ENCODE measurements at regions of chr13 and their contacts with region 1.

Region 1: GRCh38 chr13:30465585-30466357 is at the start of gene HMGB1:
- DNase-seq: peak; percentile 98 to 99 (median 99)
- ATAC-seq: peak; percentile 96 to 99 (median 98)
- H3K4me3 ChIP-seq: peak within 1 kb of the TSS; percentile 70 to 99 (median 94)
- H3K27ac ChIP-seq: peak within 1 kb of the TSS; percentile 98 to 100 (median 100)
- H3K4me1 ChIP-seq: peaks cover 2 to 39% (median 29%) of the 10 kb centered on the region in 12 donors
- H3K27me3 ChIP-seq: no peaks in the 10 kb centered on the region
- CTCF ChIP-seq: no peak
- POLR2A ChIP-seq: peak; percentile 94 to 98
- total RNA-seq, gene HMGB1: 137 to 215 (median 164) TPM

Region 2: GRCh38 chr13:30111810-30112209 is 354.0 kb before region 1 on chr13:
- intact Hi-C with region 1: no loop called
- DNase-seq: no peak
- ATAC-seq: no peak
- H3K4me3 ChIP-seq: no peak overlapping the region
- H3K27ac ChIP-seq: no peak overlapping the region
- H3K4me1 ChIP-seq: peaks cover 0 to 26% (median 12%) of the 10 kb centered on the region in 12 donors
- H3K27me3 ChIP-seq: no peaks in the 10 kb centered on the region
- CTCF ChIP-seq: no peak
- POLR2A ChIP-seq: no peak

Region 3: GRCh38 chr13:30257468-30258099 is 208.2 kb before region 1 on chr13:
- intact Hi-C with region 1: loop called in 2 of 10 experiments (anchors 5 kb)
- DNase-seq: peak in 2 of 5 donors; percentile 29 to 49
- ATAC-seq: peak; percentile 76 to 86 (median 81)
- H3K4me3 ChIP-seq: no peak overlapping the region
- H3K27ac ChIP-seq: peak overlapping the region in 9 of 12 donors; percentile 3 to 57 (median 28)
- H3K4me1 ChIP-seq: peaks cover 0 to 21% (median 9%) of the 10 kb centered on the region in 12 donors
- H3K27me3 ChIP-seq: no peaks in the 10 kb centered on the region
- CTCF ChIP-seq: no peak
- POLR2A ChIP-seq: no peak

Region 4: GRCh38 chr13:30364876-30365275 is 100.9 kb before region 1 on chr13:
- intact Hi-C with region 1: loop called in 2 of 10 experiments (anchors 5 kb)
- DNase-seq: peak in 1 of 5 donors; percentile 21
- ATAC-seq: peak in 1 of 4 donors; percentile 79
- H3K4me3 ChIP-seq: peak overlapping the region in 1 of 12 donors; percentile 17
- H3K27ac ChIP-seq: peak overlapping the region in 9 of 12 donors; percentile 20 to 79 (median 56)
- H3K4me1 ChIP-seq: peaks cover 0 to 38% (median 13%) of the 10 kb centered on the region in 12 donors
- H3K27me3 ChIP-seq: no peaks in the 10 kb centered on the region
- CTCF ChIP-seq: no peak
- POLR2A ChIP-seq: no peak

Region 5: GRCh38 chr13:30572859-30573275 is 107.1 kb after region 1 on chr13:
- intact Hi-C with region 1: loop called in 6 of 10 experiments (anchors 5 to 10 kb)
- DNase-seq: peak in 1 of 5 donors; percentile 17
- ATAC-seq: peak in 3 of 4 donors; percentile 59 to 81 (median 62)
- H3K4me3 ChIP-seq: peak overlapping the region in 10 of 12 donors; percentile 28 to 56 (median 42)
- H3K27ac ChIP-seq: peak overlapping the region in 11 of 12 donors; percentile 1 to 82 (median 53)
- H3K4me1 ChIP-seq: peaks cover 0 to 57% (median 15%) of the 10 kb centered on the region in 12 donors
- H3K27me3 ChIP-seq: no peaks in the 10 kb centered on the region
- CTCF ChIP-seq: peak in 6 of 12 donors; percentile 35 to 52 (median 42)
- POLR2A ChIP-seq: no peak

Region 6: GRCh38 chr13:30865123-30866049 is 399.6 kb after region 1 on chr13:
- intact Hi-C with region 1: loop called in 1 of 10 experiments (anchors 10 kb)
- DNase-seq: peak; percentile 75 to 88 (median 82)
- ATAC-seq: peak; percentile 77 to 87 (median 80)
- H3K4me3 ChIP-seq: no peak overlapping the region
- H3K27ac ChIP-seq: peak overlapping the region; percentile 14 to 82 (median 64)
- H3K4me1 ChIP-seq: peaks cover 0 to 47% (median 17%) of the 10 kb centered on the region in 12 donors
- H3K27me3 ChIP-seq: no peaks in the 10 kb centered on the region
- CTCF ChIP-seq: peak; percentile 83 to 95 (median 90)
- POLR2A ChIP-seq: no peak

Measured in heart left ventricle (tissue), 16 donors.